ACHN (cell line): ENCODE measurements at regions of chr16 and their contacts with region 1.

Region 1: DNA sequence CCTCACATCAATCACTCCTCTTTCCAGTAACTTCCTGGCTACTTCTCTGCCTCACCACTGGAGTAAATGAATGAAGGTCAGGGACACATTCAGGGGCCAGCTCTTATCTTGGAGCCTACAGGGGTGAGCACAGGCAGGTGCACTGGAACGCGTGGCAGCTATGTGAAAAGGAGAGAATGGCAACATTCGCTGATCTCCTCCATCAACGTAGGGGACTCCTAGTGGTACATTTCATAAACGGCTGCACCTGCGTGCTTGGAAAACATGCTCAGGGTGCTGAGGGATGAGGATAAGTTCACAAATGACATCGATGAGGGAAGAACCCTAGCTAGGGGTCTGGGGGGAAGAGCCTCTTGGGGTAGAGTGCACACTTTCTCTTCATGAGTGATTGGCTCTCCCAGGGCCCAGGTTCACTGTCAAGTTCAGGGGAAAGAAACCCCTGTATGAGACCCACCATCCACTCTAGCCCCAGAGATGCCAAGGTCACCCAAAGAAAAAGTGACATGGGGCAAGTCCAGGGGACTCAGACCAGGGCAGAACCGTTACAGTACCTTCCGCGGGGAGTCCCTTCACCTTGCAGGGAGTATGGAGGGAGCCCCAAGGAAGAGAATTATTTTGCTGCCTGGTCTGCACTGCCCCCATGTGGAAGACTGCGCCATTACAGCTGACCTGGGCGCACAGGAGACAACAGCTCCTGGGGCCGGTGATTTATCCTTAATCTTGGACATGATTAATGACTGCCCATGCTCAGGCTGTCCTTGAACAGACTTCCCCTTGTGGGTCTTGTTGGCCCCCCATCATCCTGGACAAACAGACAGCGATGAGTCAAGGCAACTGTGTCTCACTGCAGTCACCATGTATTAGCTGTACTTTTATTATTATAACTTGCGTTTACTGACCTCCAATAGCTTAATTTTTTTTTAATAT is 30.1 kb downstream of the VAC14 start:
- DNase-seq: peak; percentile 73

Region 2: GRCh38 chr16:70540994-70541393 is 229.9 kb before region 1 on chr16:
- in situ Hi-C with region 1: no loop called
- DNase-seq: no peak

Region 3: DNA sequence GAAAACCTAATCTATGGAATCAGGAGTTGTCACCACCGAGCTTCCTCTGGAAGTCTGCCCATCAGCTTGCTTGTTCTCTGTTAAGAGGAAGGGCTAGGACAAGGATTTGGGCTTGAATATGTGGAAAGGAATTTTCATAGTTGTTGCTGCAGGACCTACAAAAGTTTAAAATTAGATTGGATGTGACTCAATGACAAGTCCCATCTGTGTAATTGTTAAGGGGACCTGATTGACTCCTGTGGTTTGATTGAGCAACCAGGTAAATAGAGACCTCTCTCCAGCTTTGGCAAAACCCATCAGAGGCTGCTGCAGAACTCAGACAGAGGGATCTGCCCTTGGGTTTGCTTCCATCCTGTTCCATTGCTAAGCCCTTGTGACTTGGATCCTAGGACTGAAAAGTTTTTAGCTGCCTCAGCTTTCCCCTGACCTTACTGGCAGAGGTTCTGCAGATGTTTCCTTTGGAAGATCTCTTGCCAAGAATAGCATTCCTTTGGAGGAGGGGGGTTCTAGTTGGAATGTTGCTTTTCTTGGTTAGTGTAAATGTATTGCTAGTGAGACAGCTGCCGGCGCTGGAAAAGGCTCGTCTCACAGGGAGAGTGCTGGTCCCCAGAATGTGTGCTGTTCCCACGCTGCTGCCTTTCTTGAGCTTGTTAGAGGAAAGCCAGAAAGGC is 197.3 kb before region 1 on chr16:
- in situ Hi-C with region 1: loop called (anchors 25 kb)
- DNase-seq: no peak

Region 4: GRCh38 chr16:70679666-70680494 is 91.0 kb before region 1 on chr16:
- in situ Hi-C with region 1: loop called (anchors 10 kb)
- DNase-seq: no peak

Region 5: DNA sequence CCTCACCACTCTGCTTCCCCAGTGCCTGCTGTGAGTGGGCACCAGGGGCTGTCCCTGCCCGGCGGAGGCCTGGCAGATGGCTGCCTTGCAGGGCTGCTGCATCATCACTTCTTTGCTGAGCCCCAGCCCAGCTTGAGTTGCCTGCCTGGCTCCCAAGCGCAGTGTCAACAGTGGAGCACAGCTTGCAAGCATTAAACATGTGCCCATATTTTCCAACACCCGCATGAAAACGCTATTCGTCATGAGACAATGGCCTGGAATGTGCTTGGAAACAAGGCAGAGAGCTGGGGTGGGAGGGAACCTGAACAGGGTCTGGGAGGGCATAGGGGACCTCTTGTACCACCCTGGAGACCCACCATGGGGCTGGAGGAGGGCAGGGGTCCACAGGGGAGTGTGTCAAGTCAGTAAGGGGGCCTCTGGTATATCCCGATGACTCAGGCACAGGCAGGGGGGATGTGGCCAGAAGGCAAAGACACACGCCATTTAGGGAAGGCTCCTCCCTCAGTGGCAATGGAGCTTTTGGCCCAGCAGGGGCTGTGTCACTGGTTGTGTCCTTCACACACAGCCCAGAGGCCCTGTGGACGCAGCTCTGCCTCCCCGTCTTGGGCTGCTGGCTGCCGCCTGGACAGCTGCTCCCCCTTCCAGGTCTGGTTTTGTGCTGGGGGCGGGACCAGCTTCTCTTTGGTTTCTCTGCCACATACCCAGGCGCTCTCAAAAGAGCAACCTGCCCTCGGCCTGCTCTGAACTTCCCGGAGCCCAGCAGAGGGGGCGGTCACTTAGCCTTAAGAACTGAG is 67.7 kb before region 1 on chr16:
- in situ Hi-C with region 1: no loop called
- DNase-seq: no peak